Body of pancreas (tissue), 4 donors: ENCODE measurements at regions of chr1 and their contacts with region 1.

Region 1: DNA sequence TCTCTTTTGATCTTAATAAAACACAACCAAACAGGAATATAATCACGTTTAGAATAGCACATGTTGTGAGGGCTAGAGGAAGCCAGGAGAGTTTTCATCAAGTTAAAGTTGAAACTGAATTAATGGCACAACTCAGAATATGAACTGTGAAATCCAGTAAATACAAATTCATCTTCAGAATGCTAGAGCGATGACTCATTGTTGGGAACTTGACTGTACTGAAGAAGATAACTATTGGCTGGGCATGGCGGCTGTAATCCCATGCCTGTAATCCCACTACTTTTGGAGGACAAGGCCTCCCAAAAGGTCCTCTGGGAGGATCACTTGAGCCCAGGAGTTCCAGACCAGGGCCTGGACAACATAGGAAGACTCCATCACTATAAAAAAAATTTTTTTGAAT is 8.8 kb downstream of the SYF2 start:
- DNase-seq: no peak
- ATAC-seq: no peak
- H3K4me3 ChIP-seq: no peak overlapping the region
- H3K27ac ChIP-seq: no peak overlapping the region
- H3K4me1 ChIP-seq: no peaks in the 10 kb centered on the region
- H3K27me3 ChIP-seq: no peaks in the 10 kb centered on the region
- CTCF ChIP-seq: no peak
- POLR2A ChIP-seq: no peak

Region 2: GRCh38 chr1:24659993-24660665 is 563.3 kb before region 1 on chr1:
- intact Hi-C with region 1: loop called (anchors 10 kb)
- DNase-seq: no peak
- ATAC-seq: no peak
- H3K4me3 ChIP-seq: no peak overlapping the region
- H3K27ac ChIP-seq: peak overlapping the region in 1 of 4 donors; percentile 11
- H3K4me1 ChIP-seq: peaks cover 28% of the 10 kb centered on the region
- H3K27me3 ChIP-seq: no peaks in the 10 kb centered on the region
- CTCF ChIP-seq: no peak
- POLR2A ChIP-seq: no peak